PC-9 (cell line): ENCODE measurements at regions of chr10 and their contacts with region 1.

Region 1: GRCh38 chr10:104045151-104046089 is 40.3 kb downstream of the COL17A1 start:
- DNase-seq: peak; percentile 48 to 62
- H3K4me3 ChIP-seq: no peak overlapping the region
- H3K27ac ChIP-seq: no peak overlapping the region
- H3K4me1 ChIP-seq: peaks cover 20% of the 10 kb centered on the region
- H3K27me3 ChIP-seq: no peaks in the 10 kb centered on the region
- CTCF ChIP-seq: peak; percentile 71

Region 2: DNA sequence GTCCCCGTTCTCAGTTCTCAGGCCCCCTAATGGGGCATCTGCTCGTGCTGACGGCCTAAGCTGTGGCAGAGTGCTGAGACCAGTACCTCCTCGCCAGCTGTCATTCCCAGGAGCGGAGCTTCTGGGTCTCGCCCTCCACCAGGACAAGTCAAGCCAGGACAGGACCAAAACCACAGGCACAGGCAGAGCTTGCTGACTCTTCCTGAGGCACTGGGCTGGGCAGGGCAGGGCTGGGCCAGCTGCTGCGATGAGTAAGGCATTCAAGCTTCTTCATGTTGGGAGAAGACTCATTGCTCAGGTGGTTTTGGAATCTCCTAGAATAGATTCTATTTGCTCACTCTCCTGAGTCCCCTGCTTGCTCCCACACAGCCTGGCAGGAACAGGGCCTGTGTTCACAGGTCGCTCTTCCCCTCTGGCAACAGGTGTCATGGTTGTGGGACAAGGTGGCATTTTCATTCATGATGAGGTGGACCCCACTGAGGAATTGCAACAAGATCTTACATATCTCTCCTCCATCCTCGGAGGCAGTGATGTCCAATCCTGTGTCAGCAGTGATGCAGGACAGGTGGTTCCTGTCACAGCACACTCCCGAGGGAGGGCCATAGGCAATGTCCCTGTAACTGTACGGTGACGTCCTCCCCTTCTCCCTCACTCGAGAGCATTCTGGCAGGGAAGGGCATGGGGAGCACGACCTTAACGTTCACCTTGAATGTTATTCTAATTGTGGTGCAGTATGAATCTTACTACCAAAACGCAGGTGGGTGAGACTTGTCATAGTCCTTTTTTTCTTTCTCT is 173.1 kb before region 1 on chr10:
- CTCF ChIA-PET with region 1: no interaction called
- POLR2A ChIA-PET with region 1: no interaction called
- intact Hi-C with region 1: no loop called
- DNase-seq: peak; percentile 64 to 85
- H3K4me3 ChIP-seq: no peak overlapping the region
- H3K27ac ChIP-seq: peak overlapping the region; percentile 82; the same call in 1 of the 2 replicates
- H3K4me1 ChIP-seq: peaks cover 36% of the 10 kb centered on the region
- H3K27me3 ChIP-seq: no peaks in the 10 kb centered on the region
- CTCF ChIP-seq: no peak

Region 3: DNA sequence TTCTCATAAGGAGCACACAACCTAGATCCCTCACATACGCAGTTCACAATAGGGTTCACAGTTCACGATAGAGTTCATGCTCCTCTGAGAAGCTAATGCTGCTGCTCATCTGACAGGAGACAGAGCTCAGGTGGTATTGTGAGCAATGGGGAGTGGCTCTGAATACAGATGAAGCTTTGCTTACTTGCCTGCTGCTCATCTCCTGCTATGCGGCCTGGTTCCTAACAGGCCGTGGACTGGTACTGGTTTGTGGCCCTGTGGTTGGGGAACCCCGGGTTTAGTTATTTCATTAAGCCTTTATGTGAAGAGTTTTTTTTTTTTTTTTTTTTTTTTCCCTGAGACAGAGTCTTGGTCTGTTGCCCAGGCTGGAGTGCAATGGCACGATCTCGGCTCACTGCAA is 59.1 kb before region 1 on chr10:
- CTCF ChIA-PET with region 1: interaction called, 17 read pairs
- POLR2A ChIA-PET with region 1: no interaction called
- intact Hi-C with region 1: no loop called
- DNase-seq: no peak
- H3K4me3 ChIP-seq: no peak overlapping the region
- H3K27ac ChIP-seq: no peak overlapping the region
- H3K4me1 ChIP-seq: no peaks in the 10 kb centered on the region
- H3K27me3 ChIP-seq: no peaks in the 10 kb centered on the region
- CTCF ChIP-seq: no peak

Region 4: GRCh38 chr10:104209575-104210198 is 164.3 kb after region 1 on chr10:
- CTCF ChIA-PET with region 1: no interaction called
- POLR2A ChIA-PET with region 1: no interaction called
- intact Hi-C with region 1: loop called (anchors 1 kb)
- DNase-seq: peak in 1 of 2 experiments; percentile 19
- H3K4me3 ChIP-seq: no peak overlapping the region
- H3K27ac ChIP-seq: no peak overlapping the region
- H3K4me1 ChIP-seq: no peaks in the 10 kb centered on the region
- H3K27me3 ChIP-seq: no peaks in the 10 kb centered on the region
- CTCF ChIP-seq: peak; percentile 69

Region 5: DNA sequence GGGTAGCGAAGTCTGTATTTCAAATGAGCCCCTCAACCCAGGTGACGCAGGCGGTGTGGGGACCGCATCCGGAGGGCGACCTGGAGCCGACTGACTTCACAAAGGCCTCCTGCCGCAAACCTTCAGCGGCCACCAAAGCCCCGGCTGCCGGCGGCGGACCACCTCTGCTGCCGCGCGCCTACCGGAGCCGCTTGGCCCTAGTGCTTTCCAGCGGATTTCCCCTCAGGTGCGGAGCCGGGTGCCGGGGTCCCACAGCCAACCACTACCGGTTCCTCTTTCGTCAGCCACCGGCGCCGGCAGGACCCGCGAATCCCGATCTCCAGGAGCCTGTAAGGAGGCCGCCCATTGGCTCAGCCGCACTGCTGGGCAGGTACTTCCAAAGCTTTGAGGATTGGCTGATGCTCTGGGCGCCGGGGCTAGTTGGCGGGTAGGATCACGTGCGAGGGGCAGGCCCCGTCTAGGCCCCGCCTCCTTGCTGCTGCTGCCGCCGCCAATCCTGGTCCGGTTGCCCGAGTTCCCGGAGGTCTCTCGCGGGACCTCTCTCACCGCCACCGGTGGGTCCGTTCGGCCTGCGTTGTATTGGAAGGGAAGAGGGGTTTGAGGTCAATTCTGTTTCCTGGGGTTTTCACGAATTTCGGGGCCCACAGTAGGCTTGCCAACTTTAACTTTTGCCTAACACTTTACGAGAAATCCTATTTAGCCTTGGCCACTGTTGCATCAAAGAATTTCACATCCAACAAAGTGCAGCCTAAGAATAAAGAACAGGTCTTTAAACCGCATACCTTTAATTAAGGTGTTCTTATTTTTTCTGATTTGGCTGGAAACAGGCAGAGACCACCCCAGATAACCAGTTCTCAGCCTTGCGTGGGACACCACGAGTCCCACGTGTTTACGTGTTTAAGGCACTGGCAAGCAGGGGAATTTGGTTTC is 223.6 kb after region 1 on chr10 and contains the start of gene GSTO2:
- CTCF ChIA-PET with region 1: no interaction called
- POLR2A ChIA-PET with region 1: no interaction called
- intact Hi-C with region 1: loop called (anchors 5 kb)
- DNase-seq: peak; percentile 94 to 95
- H3K4me3 ChIP-seq: peak within 1 kb of the TSS; percentile 80
- H3K27ac ChIP-seq: peak within 1 kb of the TSS; percentile 64
- H3K4me1 ChIP-seq: peaks cover 9% of the 10 kb centered on the region; the same call in 1 of the 2 replicates
- H3K27me3 ChIP-seq: no peaks in the 10 kb centered on the region
- CTCF ChIP-seq: no peak
- total RNA-seq, gene GSTO2: 3.3 and 4.3 TPM in 2 replicates